ENCODE measurements at regions of chr9 and their contacts with region 1.

Region 1: GRCh38 chr9:12640016-12640587 is 53.1 kb upstream of the TYRP1 start:
- DNase-seq: no peak
- ATAC-seq: no peak
- H3K4me3 ChIP-seq: no peak overlapping the region
- H3K4me3 Mint-ChIP-seq: no peak overlapping the region
- H3K27ac ChIP-seq: no peak overlapping the region
- H3K27ac Mint-ChIP-seq: no peak overlapping the region
- H3K4me1 ChIP-seq: no peaks in the 10 kb centered on the region
- H3K4me1 Mint-ChIP-seq: no peaks in the 10 kb centered on the region
- H3K27me3 ChIP-seq: no peaks in the 10 kb centered on the region
- H3K27me3 Mint-ChIP-seq: no peaks in the 10 kb centered on the region
- CTCF ChIP-seq: no peak

Region 2: GRCh38 chr9:12584656-12585522 is 55.2 kb before region 1 on chr9:
- CTCF ChIA-PET with region 1: no interaction called
- POLR2A ChIA-PET with region 1: no interaction called
- intact Hi-C with region 1: no loop called
- DNase-seq: no peak
- ATAC-seq: no peak
- H3K4me3 ChIP-seq: no peak overlapping the region
- H3K4me3 Mint-ChIP-seq: no peak overlapping the region
- H3K27ac ChIP-seq: no peak overlapping the region
- H3K27ac Mint-ChIP-seq: no peak overlapping the region
- H3K4me1 ChIP-seq: no peaks in the 10 kb centered on the region
- H3K4me1 Mint-ChIP-seq: no peaks in the 10 kb centered on the region
- H3K27me3 ChIP-seq: no peaks in the 10 kb centered on the region
- H3K27me3 Mint-ChIP-seq: no peaks in the 10 kb centered on the region
- CTCF ChIP-seq: no peak

Region 3: GRCh38 chr9:12612211-12612770 is 27.8 kb before region 1 on chr9:
- CTCF ChIA-PET with region 1: no interaction called
- POLR2A ChIA-PET with region 1: no interaction called
- intact Hi-C with region 1: loop called in 1 of 2 experiments (anchors 2 kb)
- DNase-seq: no peak
- ATAC-seq: no peak
- H3K4me3 ChIP-seq: no peak overlapping the region
- H3K4me3 Mint-ChIP-seq: no peak overlapping the region
- H3K27ac ChIP-seq: no peak overlapping the region
- H3K27ac Mint-ChIP-seq: no peak overlapping the region
- H3K4me1 ChIP-seq: no peaks in the 10 kb centered on the region
- H3K4me1 Mint-ChIP-seq: no peaks in the 10 kb centered on the region
- H3K27me3 ChIP-seq: no peaks in the 10 kb centered on the region
- H3K27me3 Mint-ChIP-seq: no peaks in the 10 kb centered on the region
- CTCF ChIP-seq: no peak

Measured in CD8-positive, alpha-beta T cell (primary cell).